AG04450 (cell line): ENCODE measurements at regions of chr14 and their contacts with region 1.

Region 1: GRCh38 chr14:67359775-67360648 is at the starts of genes ATP6V1D and EIF2S1:
- DNase-seq: peak; percentile 98
- H3K4me3 ChIP-seq: peak within 1 kb of the TSS; percentile 97
- H3K27ac ChIP-seq: peak within 1 kb of the TSS; percentile 99
- H3K27me3 ChIP-seq: no peaks in the 10 kb centered on the region
- CTCF ChIP-seq: peak; percentile 98
- polyA plus RNA-seq, gene ATP6V1D: 86.4 and 107 TPM in 2 replicates
- polyA plus RNA-seq, gene EIF2S1: 105 and 149 TPM in 2 replicates

Region 2: GRCh38 chr14:67319142-67319541 is 40.9 kb before region 1 on chr14:
- CTCF ChIA-PET with region 1: interaction called, 12 read pairs
- POLR2A ChIA-PET with region 1: no interaction called
- DNase-seq: no peak
- H3K4me3 ChIP-seq: no peak overlapping the region
- H3K27ac ChIP-seq: no peak overlapping the region
- H3K27me3 ChIP-seq: no peaks in the 10 kb centered on the region
- CTCF ChIP-seq: no peak

Region 3: GRCh38 chr14:67343601-67344230 is 16.3 kb before region 1 on chr14:
- CTCF ChIA-PET with region 1: interaction called, 18 read pairs
- POLR2A ChIA-PET with region 1: no interaction called
- DNase-seq: no peak
- H3K4me3 ChIP-seq: no peak overlapping the region
- H3K27ac ChIP-seq: no peak overlapping the region
- H3K27me3 ChIP-seq: no peaks in the 10 kb centered on the region
- CTCF ChIP-seq: no peak

Region 4: GRCh38 chr14:67387195-67387594 is 27.2 kb after region 1 on chr14:
- CTCF ChIA-PET with region 1: interaction called, 12 read pairs
- POLR2A ChIA-PET with region 1: no interaction called
- DNase-seq: no peak
- H3K4me3 ChIP-seq: no peak overlapping the region
- H3K27ac ChIP-seq: no peak overlapping the region
- H3K27me3 ChIP-seq: no peaks in the 10 kb centered on the region
- CTCF ChIP-seq: no peak